ENCODE measurements at regions of chr16 and their contacts with region 1.

Region 1: DNA sequence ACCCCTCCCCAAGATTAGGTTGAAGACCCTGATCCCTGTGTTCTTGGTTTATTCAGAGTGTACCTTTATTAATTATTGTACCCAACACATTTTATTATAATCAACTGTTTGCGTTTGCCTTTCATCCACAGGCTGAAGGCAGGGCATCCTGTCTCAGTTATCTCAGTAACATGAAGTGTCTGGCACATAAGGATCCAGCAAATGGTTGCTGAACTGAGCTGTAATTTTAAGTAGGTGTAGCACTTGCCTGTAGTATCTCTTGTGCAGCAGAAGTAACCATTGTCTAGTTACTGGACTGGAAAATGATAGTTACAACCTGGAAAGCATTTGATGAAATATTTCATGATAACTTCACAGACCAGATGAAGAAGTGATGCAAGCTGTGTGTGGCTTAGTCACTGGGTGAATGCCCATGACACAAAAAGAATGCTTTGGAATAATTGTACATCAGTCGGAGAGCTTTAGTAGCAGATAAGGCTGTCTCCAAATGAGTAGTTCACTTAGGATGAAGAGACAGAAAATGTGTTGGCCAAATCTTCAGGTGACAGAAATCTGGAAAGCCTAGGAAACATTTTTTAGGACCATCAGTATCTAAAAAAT is 56.6 kb downstream of the ESRP2 start:
- DNase-seq: no peak
- ATAC-seq: no peak
- H3K4me3 Mint-ChIP-seq: no peak overlapping the region
- H3K27ac Mint-ChIP-seq: no peak overlapping the region
- H3K4me1 Mint-ChIP-seq: no peaks in the 10 kb centered on the region
- H3K27me3 Mint-ChIP-seq: no peaks in the 10 kb centered on the region
- CTCF ChIP-seq: no peak

Region 2: DNA sequence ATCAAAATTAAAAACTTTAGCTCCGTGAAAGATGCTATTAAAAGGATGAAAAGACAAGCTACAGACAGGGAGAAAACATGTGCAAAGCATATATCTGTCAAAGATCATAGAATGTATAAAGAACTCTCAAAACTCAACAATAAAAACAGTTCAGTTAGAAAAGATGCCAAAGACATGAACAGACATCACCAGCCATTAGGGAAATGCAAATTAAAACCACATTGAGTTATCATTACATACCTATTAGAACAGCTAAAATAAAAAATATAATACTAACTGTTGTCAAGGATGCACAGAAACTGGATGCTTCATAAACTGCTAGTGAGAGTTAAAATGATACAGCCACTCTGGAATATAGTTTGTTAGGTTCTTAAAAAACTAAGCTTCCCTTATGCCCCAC is 35.3 kb before region 1 on chr16:
- CTCF ChIA-PET with region 1: no interaction called
- POLR2A ChIA-PET with region 1: no interaction called
- intact Hi-C with region 1: loop called (anchors 5 kb)
- DNase-seq: no peak
- ATAC-seq: no peak
- H3K4me3 Mint-ChIP-seq: no peak overlapping the region
- H3K27ac Mint-ChIP-seq: no peak overlapping the region
- H3K4me1 Mint-ChIP-seq: peaks cover 28% of the 10 kb centered on the region
- H3K27me3 Mint-ChIP-seq: no peaks in the 10 kb centered on the region
- CTCF ChIP-seq: no peak

Region 3: GRCh38 chr16:68214726-68215125 is 35.4 kb after region 1 on chr16:
- CTCF ChIA-PET with region 1: no interaction called
- POLR2A ChIA-PET with region 1: no interaction called
- intact Hi-C with region 1: loop called (anchors 5 kb)
- DNase-seq: no peak
- ATAC-seq: no peak
- H3K4me3 Mint-ChIP-seq: no peak overlapping the region
- H3K27ac Mint-ChIP-seq: no peak overlapping the region
- H3K4me1 Mint-ChIP-seq: peaks cover 12% of the 10 kb centered on the region
- H3K27me3 Mint-ChIP-seq: no peaks in the 10 kb centered on the region
- CTCF ChIP-seq: no peak

Region 4: DNA sequence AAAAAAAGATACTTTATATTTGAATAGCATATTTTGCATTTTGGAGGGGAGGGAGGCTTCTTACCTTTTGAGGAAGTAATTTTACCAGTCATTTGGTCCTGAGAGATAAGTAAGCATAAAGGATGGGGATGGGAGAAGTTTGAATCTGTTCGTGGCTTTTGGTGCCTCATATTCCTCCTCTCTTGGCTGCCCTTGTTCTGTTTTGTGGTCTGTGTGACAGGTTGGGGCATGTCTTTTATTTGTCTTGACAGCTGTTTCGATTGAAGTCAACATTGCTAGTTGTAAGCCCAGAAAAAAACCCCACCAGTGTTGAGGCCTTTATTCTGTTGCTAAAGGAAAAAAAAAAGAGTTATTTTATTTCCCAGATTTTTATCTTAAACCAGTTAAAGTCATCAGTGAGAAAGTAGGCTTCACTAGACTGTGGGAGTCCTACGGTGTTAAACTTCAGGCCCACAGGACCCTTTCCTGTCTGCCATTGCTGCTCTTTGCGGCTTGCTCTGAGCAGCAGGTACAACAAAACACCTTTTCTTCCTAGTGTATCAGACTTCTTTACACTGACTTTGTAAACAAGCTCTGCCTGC is 96.4 kb after region 1 on chr16:
- CTCF ChIA-PET with region 1: no interaction called
- POLR2A ChIA-PET with region 1: no interaction called
- intact Hi-C with region 1: no loop called
- DNase-seq: no peak
- ATAC-seq: peak; percentile 86
- H3K4me3 Mint-ChIP-seq: peak overlapping the region; percentile 56
- H3K27ac Mint-ChIP-seq: peak overlapping the region; percentile 88
- H3K4me1 Mint-ChIP-seq: peaks cover 51% of the 10 kb centered on the region
- H3K27me3 Mint-ChIP-seq: no peaks in the 10 kb centered on the region
- CTCF ChIP-seq: no peak

Measured in activated B cell treated with CpG ODN at 0.5 μM for 24 hours (primary cell).